ENCODE measurements at regions of chr1 and their contacts with region 1.

Region 1: DNA sequence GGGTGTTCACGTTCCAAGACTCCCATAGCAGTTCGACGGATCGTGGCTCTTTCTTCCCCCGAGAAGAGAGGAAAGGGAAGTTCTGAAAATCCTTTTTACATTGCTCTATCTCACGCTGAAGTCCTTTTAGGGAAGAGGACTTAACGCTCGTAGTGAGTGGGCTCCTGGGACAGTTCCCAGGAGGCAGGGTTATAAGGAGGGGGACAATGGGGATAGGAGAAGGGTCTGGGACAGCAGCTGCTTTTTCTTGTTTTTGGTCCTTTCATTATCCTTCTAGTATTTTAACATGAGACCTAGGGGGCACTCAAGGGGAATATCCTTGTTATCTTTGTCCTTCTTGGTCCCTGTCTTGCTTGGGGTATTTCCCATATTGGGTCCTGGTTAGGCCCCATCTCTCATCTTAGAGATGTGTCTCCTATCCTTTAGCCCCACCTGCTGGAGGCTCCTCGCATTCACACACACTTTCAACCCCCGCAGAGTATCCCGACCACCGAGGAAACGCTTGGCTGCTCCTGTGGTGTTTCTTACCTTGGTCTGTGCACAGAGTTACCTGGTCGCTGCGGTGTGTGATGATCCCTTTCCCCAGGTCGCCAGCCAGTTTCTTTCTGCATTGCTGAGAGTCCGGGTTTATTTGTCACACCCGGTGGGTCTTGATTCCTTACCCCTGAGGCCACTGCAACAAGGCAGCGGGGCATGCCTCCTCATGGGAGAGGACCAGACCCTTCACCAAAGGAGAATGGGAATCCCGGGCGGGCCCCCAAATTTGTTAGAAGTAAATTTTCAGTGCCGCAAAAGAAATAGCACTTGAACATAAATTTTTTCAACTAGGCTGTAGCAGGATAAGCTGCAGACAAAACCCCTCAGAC is 29.7 kb downstream of the SCCPDH start:
- DNase-seq: peak; percentile 34
- ATAC-seq: peak; percentile 93
- H3K4me3 Mint-ChIP-seq: no peak overlapping the region
- H3K27ac Mint-ChIP-seq: no peak overlapping the region
- H3K4me1 Mint-ChIP-seq: peaks cover 4% of the 10 kb centered on the region
- H3K27me3 Mint-ChIP-seq: no peaks in the 10 kb centered on the region
- CTCF ChIP-seq: no peak

Region 2: GRCh38 chr1:246497331-246497915 is 256.5 kb before region 1 on chr1:
- CTCF ChIA-PET with region 1: interaction called, 9 read pairs
- POLR2A ChIA-PET with region 1: no interaction called
- intact Hi-C with region 1: loop called (anchors 1 kb)
- DNase-seq: no peak
- ATAC-seq: peak; percentile 86
- H3K4me3 Mint-ChIP-seq: no peak overlapping the region
- H3K27ac Mint-ChIP-seq: no peak overlapping the region
- H3K4me1 Mint-ChIP-seq: peaks cover 4% of the 10 kb centered on the region
- H3K27me3 Mint-ChIP-seq: no peaks in the 10 kb centered on the region
- CTCF ChIP-seq: peak; percentile 55

Region 3: GRCh38 chr1:246689409-246690008 is 64.4 kb before region 1 on chr1:
- CTCF ChIA-PET with region 1: interaction called, 5 read pairs
- POLR2A ChIA-PET with region 1: no interaction called
- intact Hi-C with region 1: loop called (anchors 1 kb)
- DNase-seq: no peak
- ATAC-seq: peak; percentile 90
- H3K4me3 Mint-ChIP-seq: peak overlapping the region; percentile 38
- H3K27ac Mint-ChIP-seq: no peak overlapping the region
- H3K4me1 Mint-ChIP-seq: peaks cover 4% of the 10 kb centered on the region
- H3K27me3 Mint-ChIP-seq: no peaks in the 10 kb centered on the region
- CTCF ChIP-seq: peak; percentile 19

Region 4: GRCh38 chr1:246782120-246782900 is 28.4 kb after region 1 on chr1:
- CTCF ChIA-PET with region 1: no interaction called
- POLR2A ChIA-PET with region 1: no interaction called
- intact Hi-C with region 1: no loop called
- DNase-seq: no peak
- ATAC-seq: no peak
- H3K4me3 Mint-ChIP-seq: no peak overlapping the region
- H3K27ac Mint-ChIP-seq: no peak overlapping the region
- H3K4me1 Mint-ChIP-seq: peaks cover 17% of the 10 kb centered on the region
- H3K27me3 Mint-ChIP-seq: peaks cover 6% of the 10 kb centered on the region
- CTCF ChIP-seq: no peak

Measured in activated B cell treated with CpG ODN at 0.5 μM for 24 hours (primary cell).